Prostate gland (tissue), 2 donors: ENCODE measurements at regions of chr10 and their contacts with region 1.

Region 1: DNA sequence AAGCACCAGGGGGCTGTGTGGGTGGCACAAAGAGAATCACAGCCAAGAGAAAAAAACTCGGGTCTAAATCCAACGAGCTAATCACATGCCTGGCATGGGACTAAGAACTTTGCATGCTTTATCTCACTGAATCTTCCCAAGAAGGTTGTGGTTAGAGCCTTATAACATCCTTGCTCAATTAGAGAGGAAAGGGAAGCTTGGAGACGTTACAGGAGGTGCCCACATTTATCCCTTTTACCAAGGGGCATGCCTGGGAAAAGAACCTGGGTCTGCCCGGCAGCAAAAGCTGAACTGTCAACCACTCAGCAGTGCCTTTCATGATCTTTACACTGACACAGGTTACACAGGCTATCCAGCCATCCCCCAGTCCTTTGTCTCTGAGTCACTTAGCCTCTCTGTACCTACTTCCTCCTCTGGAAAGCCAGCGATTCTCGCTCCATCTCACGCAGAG is 190.1 kb downstream of the PRPF18 start:
- DNase-seq: no peak
- H3K4me3 ChIP-seq: no peak overlapping the region
- H3K27ac ChIP-seq: no peak overlapping the region
- H3K4me1 ChIP-seq: no peaks in the 10 kb centered on the region
- H3K27me3 ChIP-seq: no peaks in the 10 kb centered on the region
- CTCF ChIP-seq: no peak
- POLR2A ChIP-seq: no peak

Region 2: GRCh38 chr10:13613519-13613918 is 163.4 kb before region 1 on chr10:
- intact Hi-C with region 1: loop called (anchors 2 kb)
- DNase-seq: peak; percentile 9
- H3K4me3 ChIP-seq: no peak overlapping the region
- H3K27ac ChIP-seq: no peak overlapping the region
- H3K4me1 ChIP-seq: peaks cover 3% of the 10 kb centered on the region
- H3K27me3 ChIP-seq: no peaks in the 10 kb centered on the region
- CTCF ChIP-seq: peak in 3 of 4 experiments; percentile 23 to 54 (median 45)
- POLR2A ChIP-seq: no peak

Region 3: DNA sequence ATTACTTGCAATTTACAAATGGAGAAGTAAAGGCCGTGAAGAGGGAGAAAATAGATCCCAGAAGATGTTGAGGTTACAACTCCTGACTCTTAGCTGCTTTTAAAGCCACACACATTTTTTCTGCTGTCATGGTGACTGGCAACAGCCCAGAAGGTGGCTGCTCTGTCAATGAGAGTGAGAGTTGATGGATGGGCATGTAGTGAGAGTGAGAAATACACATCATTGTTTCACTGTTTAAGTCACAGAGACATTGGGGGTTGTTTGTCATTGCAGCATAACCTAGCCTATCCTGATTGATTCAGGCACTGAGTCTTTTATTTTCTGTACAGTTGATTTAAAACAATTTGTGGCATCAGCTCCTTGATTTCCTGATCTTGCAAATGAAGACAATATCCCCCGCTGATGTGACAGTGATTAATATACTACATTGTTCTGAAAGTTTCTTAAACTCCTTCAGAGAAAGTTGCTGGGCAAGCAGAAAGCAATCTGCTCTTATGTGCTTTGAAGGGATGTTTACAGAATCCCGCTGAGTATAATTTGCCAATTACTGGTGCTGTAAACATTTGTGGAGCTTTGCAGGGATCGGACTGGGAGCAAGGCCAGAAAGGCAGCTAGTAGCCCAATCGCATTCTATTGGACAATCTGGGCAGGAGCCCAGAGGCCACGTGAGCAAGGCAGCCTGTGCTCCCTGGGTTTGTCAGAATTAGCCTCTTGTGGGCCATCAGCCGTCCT is 39.5 kb after region 1 on chr10:
- intact Hi-C with region 1: no loop called
- DNase-seq: peak; percentile 70
- H3K4me3 ChIP-seq: no peak overlapping the region
- H3K27ac ChIP-seq: peak overlapping the region; percentile 34 to 48
- H3K4me1 ChIP-seq: no peaks in the 10 kb centered on the region
- H3K27me3 ChIP-seq: no peaks in the 10 kb centered on the region
- CTCF ChIP-seq: no peak
- POLR2A ChIP-seq: no peak